ENCODE measurements at regions of chr2 and their contacts with region 1.

Region 1: GRCh38 chr2:25342372-25343186 is 854 bp upstream of the DNMT3A start:
- DNase-seq: peak; percentile 88
- ATAC-seq: peak; percentile 84
- H3K4me3 Mint-ChIP-seq: peak overlapping the region; percentile 76
- H3K27ac Mint-ChIP-seq: peak overlapping the region; percentile 80
- H3K4me1 Mint-ChIP-seq: peaks cover 54% of the 10 kb centered on the region
- H3K27me3 Mint-ChIP-seq: no peaks in the 10 kb centered on the region
- CTCF ChIP-seq: peak; percentile 97

Region 2: GRCh38 chr2:25331686-25332365 is 10.8 kb before region 1 on chr2:
- CTCF ChIA-PET with region 1: interaction called, 4 read pairs
- POLR2A ChIA-PET with region 1: interaction called, 26 read pairs
- intact Hi-C with region 1: no loop called
- DNase-seq: peak; percentile 89
- ATAC-seq: peak; percentile 91
- H3K4me3 Mint-ChIP-seq: no peak overlapping the region
- H3K27ac Mint-ChIP-seq: peak overlapping the region; percentile 80
- H3K4me1 Mint-ChIP-seq: peaks cover 71% of the 10 kb centered on the region
- H3K27me3 Mint-ChIP-seq: no peaks in the 10 kb centered on the region
- CTCF ChIP-seq: no peak

Region 3: GRCh38 chr2:25446122-25446521 is 103.5 kb after region 1 on chr2:
- CTCF ChIA-PET with region 1: no interaction called
- POLR2A ChIA-PET with region 1: no interaction called
- intact Hi-C with region 1: no loop called
- DNase-seq: no peak
- ATAC-seq: no peak
- H3K4me3 Mint-ChIP-seq: no peak overlapping the region
- H3K27ac Mint-ChIP-seq: no peak overlapping the region
- H3K4me1 Mint-ChIP-seq: no peaks in the 10 kb centered on the region
- H3K27me3 Mint-ChIP-seq: no peaks in the 10 kb centered on the region
- CTCF ChIP-seq: no peak